PC-3 (cell line): ENCODE measurements at regions of chr3 and their contacts with region 1.

Region 1: DNA sequence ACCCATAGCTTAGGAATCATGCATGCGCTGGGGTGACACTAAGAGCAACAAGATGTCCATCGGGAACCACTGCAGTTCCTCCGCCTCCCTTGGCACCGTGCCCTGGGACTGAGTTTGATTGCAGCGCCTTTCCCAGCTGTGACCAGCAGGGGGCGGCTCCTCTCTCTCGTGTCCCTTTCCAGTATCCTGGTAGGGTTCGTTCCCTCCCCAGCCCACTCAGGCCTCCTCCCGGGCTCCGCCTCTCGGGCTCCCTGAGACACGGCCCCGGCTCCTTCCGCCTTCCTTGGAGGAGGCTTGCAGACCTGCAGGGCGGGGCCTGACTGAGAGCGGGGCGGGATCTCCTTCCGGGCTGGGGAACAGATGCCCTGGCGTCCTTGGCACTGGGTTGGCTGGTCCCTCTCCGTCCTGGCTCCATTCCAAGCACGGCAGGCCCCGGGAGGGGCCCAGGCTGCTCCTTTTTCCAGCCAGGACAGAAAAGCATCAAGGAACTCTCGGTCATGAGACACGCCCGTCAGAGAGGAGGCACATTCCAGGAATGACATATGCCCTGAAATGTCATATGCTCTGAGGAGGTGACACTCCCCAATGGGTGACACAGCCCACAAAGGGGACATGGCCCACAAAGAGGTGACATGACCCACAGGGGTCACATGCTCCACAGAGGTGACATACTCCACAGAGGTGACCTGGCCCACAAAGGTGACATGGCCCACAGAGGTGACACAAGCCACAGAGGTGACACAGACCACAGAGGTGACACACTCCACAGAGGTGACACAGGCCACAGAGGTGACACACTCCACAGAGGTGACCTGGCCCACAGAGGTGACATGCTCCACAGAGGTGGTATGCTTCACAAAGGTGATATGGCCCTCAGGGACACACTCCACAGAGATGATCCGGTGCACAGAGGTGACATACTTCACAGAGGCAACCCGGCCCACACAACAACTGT is 79.0 kb downstream of the ABHD5 start:
- DNase-seq: peak; percentile 99
- ATAC-seq: peak; percentile 96
- H3K4me3 ChIP-seq: peak overlapping the region; percentile 41
- H3K27ac ChIP-seq: peak overlapping the region; percentile 5; the same call in 1 of the 2 replicates
- H3K4me1 ChIP-seq: peaks cover 63% of the 10 kb centered on the region
- H3K27me3 ChIP-seq: no peaks in the 10 kb centered on the region
- CTCF ChIP-seq: peak; percentile 93

Region 2: DNA sequence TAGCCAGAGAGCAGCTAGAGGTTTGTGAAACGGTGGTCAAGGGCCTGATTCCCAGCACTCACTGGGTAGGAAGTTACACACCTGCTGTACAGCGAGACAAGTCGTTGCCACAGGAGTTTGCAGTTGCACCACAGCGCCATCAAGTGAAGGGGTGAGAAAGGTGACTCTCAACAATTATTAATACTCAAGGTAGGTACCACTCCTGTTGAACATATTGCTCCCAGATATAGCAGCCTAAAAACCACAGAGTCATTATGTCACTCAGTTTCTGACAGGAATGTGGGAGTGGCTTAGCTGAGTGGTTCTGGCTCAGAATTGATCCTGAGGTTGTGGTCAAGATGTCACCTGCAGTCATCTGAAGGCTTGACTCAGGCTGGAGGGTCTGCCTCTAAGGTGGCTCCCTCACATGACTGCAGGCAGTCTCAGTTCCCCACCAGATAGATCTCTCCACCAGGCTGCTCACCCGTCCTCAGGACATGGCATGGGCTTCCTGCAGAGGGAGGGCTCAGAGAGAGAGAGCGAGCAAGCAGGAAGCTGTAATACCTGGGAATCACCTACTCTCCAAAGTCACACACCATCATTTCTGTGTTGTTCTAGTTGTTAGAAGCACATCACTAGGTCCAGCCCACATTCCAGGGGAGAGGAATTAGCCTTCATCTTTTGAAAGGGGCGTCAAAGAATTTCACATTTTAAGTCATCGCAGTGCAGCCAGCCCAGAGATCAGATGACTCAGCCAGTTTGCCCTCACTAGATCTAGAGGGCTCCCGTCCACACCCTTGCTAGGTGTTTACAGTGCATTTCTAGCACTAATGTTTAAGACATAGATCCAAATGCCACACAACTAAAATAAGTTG is 130.9 kb before region 1 on chr3:
- CTCF ChIA-PET with region 1: no interaction called
- POLR2A ChIA-PET with region 1: no interaction called
- intact Hi-C with region 1: loop called (anchors 2 kb)
- DNase-seq: peak; percentile 86
- ATAC-seq: peak; percentile 83
- H3K4me3 ChIP-seq: peak overlapping the region; percentile 28; the same call in 1 of the 2 replicates
- H3K27ac ChIP-seq: peak overlapping the region; percentile 59
- H3K4me1 ChIP-seq: peaks cover 22% of the 10 kb centered on the region
- H3K27me3 ChIP-seq: no peaks in the 10 kb centered on the region
- CTCF ChIP-seq: peak; percentile 75

Region 3: DNA sequence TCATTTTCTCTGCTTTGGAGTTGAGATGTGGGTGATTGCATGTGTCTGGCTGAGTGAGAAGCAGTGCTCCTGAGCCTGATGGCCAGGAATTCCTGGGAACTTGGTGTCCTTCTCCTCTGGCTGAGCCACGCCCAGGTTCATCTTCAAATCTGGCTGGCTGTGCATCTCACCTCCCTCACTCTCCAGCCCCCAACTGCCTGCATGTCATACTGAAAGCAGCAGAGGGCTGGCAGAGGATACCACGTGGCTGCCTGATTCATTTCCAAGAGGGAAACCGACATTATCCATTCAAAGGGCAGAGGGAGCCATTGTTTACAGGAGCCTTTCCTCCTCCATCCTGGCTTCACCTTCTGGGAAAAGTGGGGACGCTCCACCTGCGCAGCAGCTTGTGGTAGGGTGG is 21.6 kb before region 1 on chr3:
- CTCF ChIA-PET with region 1: no interaction called
- POLR2A ChIA-PET with region 1: no interaction called
- intact Hi-C with region 1: no loop called
- DNase-seq: peak; percentile 52
- ATAC-seq: peak; percentile 37
- H3K4me3 ChIP-seq: no peak overlapping the region
- H3K27ac ChIP-seq: peak overlapping the region; percentile 53
- H3K4me1 ChIP-seq: peaks cover 22% of the 10 kb centered on the region
- H3K27me3 ChIP-seq: no peaks in the 10 kb centered on the region
- CTCF ChIP-seq: 0 out of 2 replicates have a peak, but pooled peaks have one; percentile 12

Region 4: GRCh38 chr3:43870120-43870519 is 100.4 kb after region 1 on chr3:
- CTCF ChIA-PET with region 1: no interaction called
- POLR2A ChIA-PET with region 1: interaction called, 24 read pairs
- intact Hi-C with region 1: loop called (anchors 2 kb)
- DNase-seq: peak; percentile 93
- ATAC-seq: peak; percentile 52
- H3K4me3 ChIP-seq: no peak overlapping the region
- H3K27ac ChIP-seq: peak overlapping the region; percentile 97
- H3K4me1 ChIP-seq: peaks cover 95% of the 10 kb centered on the region
- H3K27me3 ChIP-seq: no peaks in the 10 kb centered on the region
- CTCF ChIP-seq: no peak

Region 5: DNA sequence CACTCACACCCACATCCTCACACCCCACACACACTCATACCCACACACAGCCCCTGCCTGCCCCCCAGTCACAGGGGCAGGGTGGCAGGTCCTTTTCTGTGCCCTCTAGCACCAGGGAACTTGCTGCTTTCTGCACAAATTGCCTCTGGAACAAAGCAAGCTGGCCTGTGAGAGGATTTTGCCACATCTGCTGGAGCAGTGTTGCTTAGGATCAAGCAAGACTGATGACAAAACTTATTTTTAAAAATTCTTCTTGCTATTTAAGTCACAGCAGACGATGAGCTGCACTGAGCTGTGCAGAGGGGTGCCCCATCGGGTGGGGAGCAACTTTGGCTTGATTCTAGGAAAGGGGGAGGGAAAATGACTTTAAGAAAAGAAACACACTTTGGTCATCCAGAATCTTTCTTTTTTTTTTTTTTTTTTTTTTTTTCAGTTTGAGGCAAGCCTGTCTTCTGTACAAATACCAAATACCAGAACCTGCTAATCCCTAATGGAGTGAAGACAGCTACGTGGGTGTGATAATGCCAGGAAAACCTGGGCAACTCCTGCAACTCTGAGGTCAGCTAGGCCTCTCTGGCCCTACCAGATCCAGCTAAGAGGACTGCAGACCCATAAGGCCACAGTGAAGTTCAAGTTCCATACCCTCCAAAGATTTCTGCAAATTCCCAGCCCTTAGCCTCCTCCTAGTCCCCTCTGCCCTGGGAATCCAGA is 116.3 kb after region 1 on chr3:
- CTCF ChIA-PET with region 1: no interaction called
- POLR2A ChIA-PET with region 1: interaction called, 21 read pairs
- intact Hi-C with region 1: no loop called
- DNase-seq: no peak
- ATAC-seq: no peak
- H3K4me3 ChIP-seq: no peak overlapping the region
- H3K27ac ChIP-seq: no peak overlapping the region
- H3K4me1 ChIP-seq: no peaks in the 10 kb centered on the region
- H3K27me3 ChIP-seq: no peaks in the 10 kb centered on the region
- CTCF ChIP-seq: no peak

Region 6: DNA sequence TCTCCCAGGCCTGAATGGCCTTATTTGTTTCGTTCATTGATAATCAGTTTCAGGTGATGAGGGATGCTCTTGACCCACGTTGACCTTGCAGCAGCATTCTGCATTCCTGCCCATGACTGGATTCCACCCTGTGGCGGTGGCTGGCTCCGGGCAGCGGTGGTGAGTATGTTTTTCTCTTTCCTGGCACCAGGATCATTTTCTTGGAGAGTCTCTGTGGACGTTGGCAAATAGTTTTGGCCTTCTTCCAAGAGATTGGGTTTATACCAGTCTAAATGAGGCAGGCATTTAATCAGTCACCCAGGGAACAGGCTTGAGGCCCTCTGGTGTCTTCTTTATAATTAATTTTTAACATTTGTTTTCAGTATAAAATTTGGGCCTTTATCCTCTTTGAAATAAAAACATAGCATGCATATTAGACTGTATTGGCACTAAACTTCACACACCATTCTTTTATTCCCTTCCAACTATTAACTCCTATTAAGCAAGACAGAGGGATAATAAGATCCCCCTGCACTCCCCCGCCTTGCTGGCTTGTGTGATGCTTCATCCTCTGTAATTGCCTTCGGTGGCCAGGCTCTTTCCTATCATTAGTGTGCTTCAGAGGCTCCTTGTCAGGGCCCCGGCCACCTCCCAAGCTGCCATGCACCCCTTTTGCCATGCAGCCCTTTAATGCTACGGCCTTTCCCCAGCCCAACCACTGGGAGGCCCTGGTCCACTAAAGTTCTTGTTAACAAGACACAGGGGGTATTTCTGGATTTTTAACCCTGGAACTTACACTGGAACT is 295.8 kb after region 1 on chr3:
- CTCF ChIA-PET with region 1: no interaction called
- POLR2A ChIA-PET with region 1: no interaction called
- intact Hi-C with region 1: loop called (anchors 5 kb)
- DNase-seq: peak; percentile 89
- ATAC-seq: peak; percentile 44
- H3K4me3 ChIP-seq: no peak overlapping the region
- H3K27ac ChIP-seq: no peak overlapping the region
- H3K4me1 ChIP-seq: peaks cover 28% of the 10 kb centered on the region
- H3K27me3 ChIP-seq: no peaks in the 10 kb centered on the region
- CTCF ChIP-seq: peak; percentile 27